ENCODE measurements at regions of chr16 and their contacts with region 1.

Region 1: DNA sequence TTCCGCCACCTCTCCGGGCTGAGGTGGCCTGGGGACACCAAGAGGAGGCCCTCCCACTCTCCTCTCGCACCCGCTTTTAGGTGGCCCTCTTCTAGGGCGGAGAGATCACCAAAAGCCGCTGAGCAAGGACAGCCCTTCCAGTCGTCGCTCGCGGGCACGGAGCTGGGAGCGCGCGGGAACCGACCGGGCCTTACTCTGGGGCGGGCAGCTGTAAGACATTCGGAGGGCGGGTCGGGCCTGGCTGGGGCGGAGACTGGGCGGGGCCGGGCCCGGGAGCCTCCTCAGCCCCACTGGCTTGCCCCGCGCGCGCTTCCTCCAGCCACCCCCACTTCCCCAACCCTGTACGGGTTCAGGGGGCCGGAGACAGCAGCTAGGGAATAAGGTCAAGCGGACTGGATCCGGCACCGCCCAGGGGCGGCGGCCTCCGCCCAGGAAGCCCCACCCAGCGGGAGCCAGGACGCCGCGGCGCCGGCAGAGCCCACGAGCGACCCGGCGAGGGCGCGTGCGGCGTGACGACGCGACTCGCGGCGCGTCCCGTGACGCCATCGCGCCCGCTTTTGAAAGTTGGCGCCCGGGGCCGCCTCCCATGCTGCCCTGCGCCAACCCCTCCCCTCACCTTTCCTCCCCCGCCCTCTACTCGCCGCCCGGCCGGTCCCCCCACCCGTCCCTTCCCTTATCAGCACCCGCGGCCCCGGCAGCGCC is 351 bp upstream of the CTCF start:
- DNase-seq: peak; percentile 97
- ATAC-seq: peak; percentile 91 to 96

Region 2: DNA sequence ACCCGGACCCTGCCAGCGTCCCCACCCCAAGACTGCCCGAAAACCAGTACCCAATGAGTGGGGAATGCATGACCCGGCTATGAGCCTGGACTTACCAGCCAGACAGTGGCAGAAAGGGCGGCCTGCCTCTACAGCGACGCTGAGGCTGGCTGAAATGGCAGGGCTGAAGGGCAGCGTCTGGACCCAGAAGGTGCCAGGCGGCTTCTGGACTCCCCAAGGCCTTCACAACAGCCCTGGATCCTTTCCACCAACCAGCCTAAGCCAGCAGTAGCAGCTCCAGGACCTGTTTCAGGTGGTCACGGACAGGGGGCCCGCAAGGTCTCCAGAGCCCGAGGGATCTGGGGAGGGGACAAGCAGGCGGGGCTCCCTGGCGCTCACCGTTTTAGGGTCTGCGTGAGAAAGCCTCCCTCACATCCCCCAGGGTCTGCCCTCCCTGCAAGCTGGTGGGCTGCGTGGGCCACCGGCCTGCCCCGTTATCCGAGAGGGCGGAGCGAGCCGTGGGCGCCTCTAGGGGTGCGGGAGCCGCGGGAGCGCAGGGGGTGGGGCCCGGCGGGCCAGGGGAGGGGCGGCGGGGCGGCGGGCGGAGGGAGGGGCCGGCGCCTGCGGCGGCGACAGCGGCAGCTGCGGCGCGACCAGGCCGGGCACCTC is 33.6 kb before region 1 on chr16 and contains the start of gene RIPOR1:
- intact Hi-C with region 1: loop called in 1 of 2 experiments (anchors 2 kb)
- DNase-seq: peak; percentile 79
- ATAC-seq: peak; percentile 60 to 76
- total RNA-seq, gene RIPOR1: 66.2 to 80.9 TPM

Region 3: GRCh38 chr16:67641779-67642708 is 80.1 kb after region 1 on chr16:
- intact Hi-C with region 1: loop called in 1 of 2 experiments (anchors 5 kb)
- DNase-seq: peak; percentile 73
- ATAC-seq: peak; percentile 67 to 89

Measured in left cardiac atrium (tissue), 4 donors.